PC-9 (cell line): ENCODE measurements at regions of chr2 and their contacts with region 1.

Region 1: GRCh38 chr2:64839844-64840243 is 149.4 kb upstream of the SLC1A4 start:
- DNase-seq: no peak
- H3K4me3 ChIP-seq: no peak overlapping the region
- H3K27ac ChIP-seq: peak overlapping the region; percentile 87
- H3K4me1 ChIP-seq: peaks cover 59% of the 10 kb centered on the region
- H3K27me3 ChIP-seq: no peaks in the 10 kb centered on the region
- CTCF ChIP-seq: no peak

Region 2: DNA sequence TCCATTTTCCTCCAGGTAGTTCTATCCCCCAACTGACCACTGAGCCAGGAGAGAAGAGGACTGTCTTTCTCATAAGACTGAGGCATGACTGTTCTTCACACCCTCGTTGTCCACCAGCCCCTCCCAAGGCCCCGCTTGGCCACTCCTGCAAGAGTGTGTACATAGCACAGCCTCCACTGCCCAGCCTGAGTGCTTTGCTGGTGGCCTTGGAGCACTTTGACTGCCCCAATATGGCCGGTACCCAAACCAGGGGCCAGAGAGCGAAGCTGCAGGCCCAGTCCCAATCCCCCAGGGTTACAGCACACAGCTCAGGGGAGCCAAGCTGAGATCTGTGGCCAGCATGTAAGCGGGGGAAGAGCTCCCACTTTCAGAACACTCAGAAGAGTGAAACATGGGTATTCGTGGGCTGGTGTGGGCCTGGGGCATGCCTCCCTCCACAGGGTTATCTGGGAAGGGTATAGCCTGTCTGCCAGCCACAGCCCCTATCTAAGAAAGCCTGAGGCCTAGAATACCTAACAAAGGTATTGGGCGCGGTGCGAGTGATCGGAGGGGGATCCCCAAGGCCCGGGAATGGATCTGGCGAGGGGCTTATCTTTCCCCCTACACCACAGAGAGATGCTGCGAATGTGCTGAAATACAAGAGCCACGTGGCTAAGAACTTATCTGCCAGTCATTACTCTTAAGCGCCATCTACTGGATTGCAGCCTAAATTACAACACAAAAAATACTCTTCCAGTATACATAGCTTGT is 1415.3 kb before region 1 on chr2:
- CTCF ChIA-PET with region 1: no interaction called
- POLR2A ChIA-PET with region 1: interaction called, 14 read pairs
- intact Hi-C with region 1: no loop called
- DNase-seq: peak in 1 of 2 experiments; percentile 47
- H3K4me3 ChIP-seq: no peak overlapping the region
- H3K27ac ChIP-seq: no peak overlapping the region
- H3K4me1 ChIP-seq: no peaks in the 10 kb centered on the region
- H3K27me3 ChIP-seq: no peaks in the 10 kb centered on the region
- CTCF ChIP-seq: peak; percentile 83

Region 3: DNA sequence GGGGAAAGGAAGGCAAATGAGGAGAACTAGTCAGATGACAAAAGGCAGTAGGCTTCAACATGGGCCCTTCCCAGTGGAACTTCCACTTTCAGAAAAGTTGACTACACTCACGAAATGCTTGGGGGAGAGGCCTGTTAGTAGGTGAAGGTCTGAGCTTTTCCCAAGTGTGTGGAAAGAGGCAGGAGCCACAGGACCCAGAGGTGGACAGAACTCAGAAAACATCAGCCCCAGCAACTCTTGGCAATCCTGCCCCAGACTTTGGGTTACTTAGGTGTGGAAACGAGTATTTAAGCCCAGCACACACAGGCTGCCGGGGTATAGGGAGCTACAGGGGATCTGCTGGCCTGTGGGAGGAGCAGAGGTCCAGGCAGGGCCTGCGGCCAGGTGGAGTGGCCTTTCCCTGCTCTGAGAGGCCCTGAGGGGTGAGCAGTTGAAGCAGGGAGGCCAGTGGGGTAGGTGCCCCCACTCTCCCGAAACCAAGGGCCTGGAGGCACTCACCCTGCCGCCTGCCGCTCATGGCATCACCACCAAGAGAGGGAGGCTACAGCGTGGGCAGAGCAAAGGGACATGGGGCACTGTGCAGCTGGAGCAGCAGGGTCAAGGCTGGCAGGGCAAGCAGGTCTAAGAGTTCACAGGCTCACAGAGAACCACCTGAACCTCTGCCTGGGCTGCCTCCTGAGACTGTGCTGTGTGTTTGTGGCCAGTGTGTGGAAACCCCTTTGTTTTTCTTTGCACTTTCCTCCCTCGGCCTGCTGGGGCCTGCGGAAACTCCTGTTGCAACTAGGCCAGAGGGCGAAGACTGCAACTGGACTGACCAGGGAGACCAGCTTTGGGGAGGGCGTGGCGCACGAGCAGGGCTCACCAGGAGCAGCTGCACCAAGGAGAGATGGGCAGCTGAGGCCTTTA is 55.4 kb before region 1 on chr2:
- CTCF ChIA-PET with region 1: no interaction called
- POLR2A ChIA-PET with region 1: interaction called, 11 read pairs
- intact Hi-C with region 1: no loop called
- DNase-seq: peak; percentile 90 to 95
- H3K4me3 ChIP-seq: peak overlapping the region; percentile 33; the same call in 1 of the 2 replicates
- H3K27ac ChIP-seq: peak overlapping the region; percentile 93
- H3K4me1 ChIP-seq: peaks cover 96% of the 10 kb centered on the region
- H3K27me3 ChIP-seq: no peaks in the 10 kb centered on the region
- CTCF ChIP-seq: no peak

Region 4: GRCh38 chr2:64819774-64820696 is 19.8 kb before region 1 on chr2:
- CTCF ChIA-PET with region 1: no interaction called
- POLR2A ChIA-PET with region 1: interaction called, 10 read pairs
- intact Hi-C with region 1: no loop called
- DNase-seq: no peak
- H3K4me3 ChIP-seq: no peak overlapping the region
- H3K27ac ChIP-seq: no peak overlapping the region
- H3K4me1 ChIP-seq: peaks cover 43% of the 10 kb centered on the region
- H3K27me3 ChIP-seq: no peaks in the 10 kb centered on the region
- CTCF ChIP-seq: no peak

Region 5: GRCh38 chr2:64859312-64860212 is 19.7 kb after region 1 on chr2:
- CTCF ChIA-PET with region 1: no interaction called
- POLR2A ChIA-PET with region 1: interaction called, 6 read pairs
- intact Hi-C with region 1: loop called (anchors 2 kb)
- DNase-seq: peak; percentile 91 to 94
- H3K4me3 ChIP-seq: peak overlapping the region; percentile 49
- H3K27ac ChIP-seq: peak overlapping the region; percentile 86
- H3K4me1 ChIP-seq: peaks cover 62% of the 10 kb centered on the region
- H3K27me3 ChIP-seq: no peaks in the 10 kb centered on the region
- CTCF ChIP-seq: no peak; the same call in 1 of the 2 replicates

Region 6: DNA sequence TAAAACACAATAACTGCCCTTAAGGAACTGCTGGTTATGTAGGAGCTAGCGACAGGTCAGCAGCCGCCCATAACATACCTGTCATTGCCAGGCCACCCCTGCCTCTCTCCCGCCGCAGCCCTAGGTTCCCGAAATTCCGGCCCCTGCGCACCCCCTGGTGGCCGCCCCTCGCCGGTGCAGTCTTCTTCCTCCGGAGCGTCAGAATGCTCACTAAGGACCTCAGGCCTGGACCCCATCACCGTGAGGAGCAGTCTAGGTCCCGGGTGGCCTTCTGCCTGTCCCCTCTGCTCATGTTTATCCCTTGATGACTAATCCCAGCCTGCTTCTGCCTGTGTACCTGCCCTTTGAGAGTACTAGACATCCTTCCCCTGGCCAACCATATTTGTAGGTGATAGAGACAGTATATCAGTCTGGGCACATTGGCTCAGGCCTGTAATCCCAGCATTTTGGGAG is 33.7 kb after region 1 on chr2:
- CTCF ChIA-PET with region 1: no interaction called
- POLR2A ChIA-PET with region 1: interaction called, 24 read pairs
- intact Hi-C with region 1: no loop called
- DNase-seq: peak; percentile 66 to 88
- H3K4me3 ChIP-seq: no peak overlapping the region
- H3K27ac ChIP-seq: no peak overlapping the region
- H3K4me1 ChIP-seq: peaks cover 26% of the 10 kb centered on the region
- H3K27me3 ChIP-seq: no peaks in the 10 kb centered on the region
- CTCF ChIP-seq: peak; percentile 99

Region 7: DNA sequence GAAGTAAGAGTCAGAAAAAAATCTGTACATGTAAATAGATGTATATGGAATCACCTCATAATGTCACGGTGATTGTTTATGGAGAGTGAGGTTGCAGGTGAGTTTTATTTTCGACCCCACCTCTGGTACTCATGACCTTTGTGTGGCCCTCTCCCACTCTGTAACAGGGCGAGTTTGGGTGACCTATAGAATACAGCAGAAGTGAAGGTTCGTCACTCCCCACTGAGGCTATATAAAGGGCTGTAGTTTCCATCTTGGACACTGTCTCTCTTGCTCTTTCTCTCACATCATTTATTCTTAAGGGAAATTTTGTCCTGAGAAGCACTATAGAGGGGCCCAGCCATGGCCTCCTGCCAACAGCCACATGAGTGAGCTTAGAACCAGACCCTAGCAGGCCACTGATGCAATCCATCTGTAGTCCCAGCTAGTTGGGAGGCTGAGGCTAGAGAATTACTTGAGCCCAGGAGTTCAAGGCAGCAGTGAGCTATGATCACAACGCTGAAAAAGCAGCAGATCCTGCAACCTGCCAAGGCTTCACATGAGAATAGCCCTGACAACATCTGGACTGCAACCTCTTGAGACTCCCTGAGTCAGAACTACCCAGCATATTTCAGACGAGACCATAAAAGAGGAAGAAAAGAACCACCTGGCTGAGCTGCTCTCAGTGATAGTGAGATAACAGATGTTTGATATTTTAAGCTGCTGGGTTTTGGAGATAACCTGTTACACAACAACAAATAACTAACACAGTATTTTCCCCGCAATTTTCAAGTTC is 75.1 kb after region 1 on chr2:
- CTCF ChIA-PET with region 1: interaction called, 10 read pairs
- POLR2A ChIA-PET with region 1: no interaction called
- intact Hi-C with region 1: no loop called
- DNase-seq: no peak
- H3K4me3 ChIP-seq: no peak overlapping the region
- H3K27ac ChIP-seq: no peak overlapping the region
- H3K4me1 ChIP-seq: no peaks in the 10 kb centered on the region
- H3K27me3 ChIP-seq: no peaks in the 10 kb centered on the region
- CTCF ChIP-seq: no peak